CD4-positive, alpha-beta memory T cell (primary cell): ENCODE measurements at regions of chr9 and their contacts with region 1.

Region 1: DNA sequence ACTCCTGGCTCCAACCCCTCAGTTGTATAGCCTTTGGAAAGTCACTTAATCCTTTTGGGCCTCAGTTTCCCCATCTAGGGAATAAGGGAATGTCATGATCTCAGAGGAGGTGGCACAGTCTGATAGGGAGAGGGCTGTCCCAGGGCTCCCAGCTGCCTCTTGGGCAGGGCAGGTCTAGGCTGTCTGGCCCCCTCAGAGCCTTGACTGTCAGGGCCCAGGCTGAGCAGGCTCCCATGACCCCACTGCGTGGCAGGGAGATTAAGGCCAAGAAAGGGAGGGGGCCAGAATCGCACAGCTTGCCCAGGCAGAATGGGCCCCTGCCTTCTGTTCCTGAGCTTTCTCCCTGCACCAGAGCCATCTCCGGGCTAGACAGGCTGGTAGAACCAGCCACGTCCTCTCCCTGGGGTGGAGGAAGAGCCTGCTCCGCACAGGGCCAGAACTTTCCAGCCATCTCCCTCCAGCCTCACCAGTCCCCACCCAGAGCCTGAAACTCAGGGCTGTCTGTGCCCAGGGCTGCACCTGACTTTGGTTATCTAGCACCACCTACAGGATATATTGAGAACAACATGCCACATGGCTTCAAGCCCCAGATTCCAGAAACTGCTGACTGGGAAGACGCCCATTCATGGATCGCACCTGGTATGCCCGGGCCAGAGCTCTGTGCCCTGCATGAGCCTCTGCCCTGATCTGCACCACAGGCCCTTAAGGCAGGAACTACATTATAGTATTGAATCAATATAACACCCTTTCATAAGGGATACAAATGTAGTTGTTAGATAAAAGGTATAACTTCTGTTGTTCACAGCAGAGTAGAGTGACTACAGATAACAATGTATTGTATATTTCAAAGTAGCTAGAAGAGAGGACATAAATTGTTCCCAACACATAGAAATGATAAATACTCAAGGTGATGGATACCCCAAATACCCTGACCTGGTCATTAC is 32.0 kb downstream of the NAIF1 start:
- DNase-seq: peak; percentile 78 to 82 (median 80)
- H3K4me3 ChIP-seq: no peak overlapping the region
- H3K4me3 Mint-ChIP-seq: peak overlapping the region; percentile 11 to 84 (median 64)
- H3K27ac ChIP-seq: peak overlapping the region; percentile 15
- H3K27ac Mint-ChIP-seq: peak overlapping the region; percentile 87 to 95 (median 92)
- H3K4me1 ChIP-seq: peaks cover 51% of the 10 kb centered on the region
- H3K4me1 Mint-ChIP-seq: peaks cover 19 to 46% (median 32%) of the 10 kb centered on the region in 4 donors
- H3K27me3 ChIP-seq: no peaks in the 10 kb centered on the region
- H3K27me3 Mint-ChIP-seq: no peaks in the 10 kb centered on the region

Region 2: GRCh38 chr9:127869310-127870152 is 165.6 kb before region 1 on chr9:
- CTCF ChIA-PET with region 1: interaction called, 15 read pairs
- POLR2A ChIA-PET with region 1: no interaction called
- intact Hi-C with region 1: no loop called
- DNase-seq: peak; percentile 61 to 76 (median 63)
- H3K4me3 ChIP-seq: no peak overlapping the region
- H3K4me3 Mint-ChIP-seq: no peak overlapping the region
- H3K27ac ChIP-seq: no peak overlapping the region
- H3K27ac Mint-ChIP-seq: peak overlapping the region in 2 of 7 donors; percentile 31 to 53
- H3K4me1 ChIP-seq: peaks cover 20% of the 10 kb centered on the region
- H3K4me1 Mint-ChIP-seq: peaks cover 13 to 20% (median 15%) of the 10 kb centered on the region in 4 donors
- H3K27me3 ChIP-seq: no peaks in the 10 kb centered on the region
- H3K27me3 Mint-ChIP-seq: no peaks in the 10 kb centered on the region

Region 3: GRCh38 chr9:127943731-127944144 is 91.4 kb before region 1 on chr9:
- CTCF ChIA-PET with region 1: interaction called, 216 read pairs
- POLR2A ChIA-PET with region 1: interaction called, 130 read pairs
- intact Hi-C with region 1: loop called (anchors 1 kb)
- DNase-seq: peak; percentile 66 to 76 (median 72)
- H3K4me3 ChIP-seq: no peak overlapping the region
- H3K4me3 Mint-ChIP-seq: no peak overlapping the region
- H3K27ac ChIP-seq: no peak overlapping the region
- H3K27ac Mint-ChIP-seq: peak overlapping the region; percentile 78 to 93 (median 88)
- H3K4me1 ChIP-seq: peaks cover 30% of the 10 kb centered on the region
- H3K4me1 Mint-ChIP-seq: peaks cover 16 to 50% (median 23%) of the 10 kb centered on the region in 4 donors
- H3K27me3 ChIP-seq: no peaks in the 10 kb centered on the region
- H3K27me3 Mint-ChIP-seq: no peaks in the 10 kb centered on the region

Region 4: GRCh38 chr9:127980706-127981558 is 54.2 kb before region 1 on chr9 and contains the start of gene EEIG1:
- CTCF ChIA-PET with region 1: interaction called, 182 read pairs
- POLR2A ChIA-PET with region 1: interaction called, 1,317 read pairs
- intact Hi-C with region 1: loop called (anchors 1 kb)
- DNase-seq: peak; percentile 96 to 99 (median 97)
- H3K4me3 ChIP-seq: peak within 1 kb of the TSS; percentile 72 to 92
- H3K4me3 Mint-ChIP-seq: peak within 1 kb of the TSS; percentile 94 to 98 (median 97)
- H3K27ac ChIP-seq: peak within 1 kb of the TSS; percentile 78
- H3K27ac Mint-ChIP-seq: peak within 1 kb of the TSS; percentile 92 to 97 (median 94)
- H3K4me1 ChIP-seq: peaks cover 46% of the 10 kb centered on the region
- H3K4me1 Mint-ChIP-seq: peaks cover 27 to 51% (median 38%) of the 10 kb centered on the region in 4 donors
- H3K27me3 ChIP-seq: no peaks in the 10 kb centered on the region
- H3K27me3 Mint-ChIP-seq: no peaks in the 10 kb centered on the region
- total RNA-seq, gene EEIG1: 516 to 550 TPM

Region 5: DNA sequence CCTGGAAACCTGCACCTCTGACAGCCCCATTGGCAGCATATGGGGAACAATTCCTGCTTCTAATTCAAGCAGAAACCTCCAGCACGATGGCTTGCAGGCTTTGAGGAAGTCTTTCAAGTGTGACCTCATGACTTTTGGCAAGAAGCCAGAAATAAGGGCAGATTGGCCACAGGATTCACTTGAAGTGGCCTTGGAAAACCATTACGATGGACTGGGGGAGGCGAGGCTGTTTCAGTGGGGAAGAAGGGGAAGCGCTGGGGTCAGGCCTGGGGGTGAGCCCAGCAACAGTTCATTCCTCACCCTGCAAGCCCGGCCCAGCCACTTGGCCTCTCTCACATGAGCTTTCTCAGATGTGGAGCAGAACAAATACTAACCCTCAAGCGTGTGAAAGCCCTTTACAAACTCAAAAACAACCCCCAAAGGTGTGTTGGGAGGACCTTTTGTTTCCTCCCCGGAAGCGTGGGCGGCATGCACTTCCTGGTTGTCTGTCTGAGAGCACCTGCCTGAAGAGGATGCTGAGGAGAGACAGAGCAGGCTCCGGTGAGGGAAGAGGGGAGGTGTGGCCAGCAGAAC is 27.4 kb before region 1 on chr9:
- CTCF ChIA-PET with region 1: interaction called, 12 read pairs
- POLR2A ChIA-PET with region 1: interaction called, 313 read pairs
- intact Hi-C with region 1: loop called (anchors 1 kb)
- DNase-seq: peak; percentile 90 to 97 (median 92)
- H3K4me3 ChIP-seq: peak overlapping the region in 1 of 2 donors; percentile 29
- H3K4me3 Mint-ChIP-seq: peak overlapping the region; percentile 75 to 93 (median 82)
- H3K27ac ChIP-seq: peak overlapping the region; percentile 46
- H3K27ac Mint-ChIP-seq: peak overlapping the region; percentile 94 to 100 (median 97)
- H3K4me1 ChIP-seq: peaks cover 79% of the 10 kb centered on the region
- H3K4me1 Mint-ChIP-seq: peaks cover 33 to 90% (median 61%) of the 10 kb centered on the region in 4 donors
- H3K27me3 ChIP-seq: no peaks in the 10 kb centered on the region
- H3K27me3 Mint-ChIP-seq: no peaks in the 10 kb centered on the region

Region 6: GRCh38 chr9:128055344-128056040 is 20.4 kb after region 1 on chr9:
- CTCF ChIA-PET with region 1: interaction called, 13 read pairs
- POLR2A ChIA-PET with region 1: no interaction called
- intact Hi-C with region 1: no loop called
- DNase-seq: no peak
- H3K4me3 ChIP-seq: no peak overlapping the region
- H3K4me3 Mint-ChIP-seq: no peak overlapping the region
- H3K27ac ChIP-seq: no peak overlapping the region
- H3K27ac Mint-ChIP-seq: no peak overlapping the region
- H3K4me1 ChIP-seq: peaks cover 4% of the 10 kb centered on the region
- H3K4me1 Mint-ChIP-seq: peaks cover 0 to 2% (median 0%) of the 10 kb centered on the region in 4 donors
- H3K27me3 ChIP-seq: no peaks in the 10 kb centered on the region
- H3K27me3 Mint-ChIP-seq: no peaks in the 10 kb centered on the region

Region 7: DNA sequence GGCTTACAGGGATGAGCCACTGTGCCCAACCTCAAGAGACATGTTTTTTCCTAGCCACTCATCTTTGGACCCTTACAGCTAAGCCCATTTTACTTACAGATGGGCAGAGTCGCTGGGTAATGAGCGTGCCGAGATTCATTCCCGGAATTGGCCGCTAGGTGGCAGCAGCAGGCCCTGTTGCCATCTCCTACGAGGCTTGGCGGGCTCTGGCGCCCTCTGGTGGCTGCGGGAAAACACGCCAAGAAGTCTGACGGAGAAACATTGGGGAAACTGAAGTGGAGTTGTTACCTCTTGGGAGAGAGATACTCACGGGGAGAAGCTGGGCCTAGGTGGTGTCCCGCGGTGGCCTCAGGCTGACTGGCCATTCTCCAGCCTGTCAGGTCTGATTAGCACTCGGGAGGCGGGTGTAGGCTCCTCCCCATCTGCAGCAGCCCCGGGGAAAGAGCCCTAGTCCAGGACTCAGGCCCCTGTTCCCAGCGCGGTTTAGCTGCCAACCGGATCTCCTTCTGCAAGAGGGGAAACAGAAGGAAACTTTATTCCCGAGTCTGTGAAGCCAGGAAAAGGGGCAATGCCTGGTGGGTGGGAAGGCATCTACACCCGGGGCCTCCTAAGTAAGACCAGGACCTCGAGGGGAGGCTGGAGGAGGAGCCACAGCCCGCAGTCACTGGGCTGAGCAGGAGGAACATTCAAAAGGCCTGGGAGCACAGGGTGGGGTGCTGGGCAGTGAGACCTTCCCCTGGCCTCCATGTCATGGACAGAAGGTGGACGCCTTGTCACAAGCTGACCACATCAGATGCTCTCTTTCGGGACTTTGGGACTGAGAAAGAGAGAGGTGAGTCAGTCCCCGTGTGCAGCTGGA is 82.7 kb after region 1 on chr9:
- CTCF ChIA-PET with region 1: interaction called, 7 read pairs
- POLR2A ChIA-PET with region 1: no interaction called
- intact Hi-C with region 1: loop called (anchors 2 kb)
- DNase-seq: peak; percentile 88 to 93 (median 91)
- H3K4me3 ChIP-seq: no peak overlapping the region
- H3K4me3 Mint-ChIP-seq: peak overlapping the region in 2 of 8 donors; percentile 48 to 50
- H3K27ac ChIP-seq: no peak overlapping the region
- H3K27ac Mint-ChIP-seq: peak overlapping the region in 6 of 7 donors; percentile 9 to 91 (median 61)
- H3K4me1 ChIP-seq: peaks cover 6% of the 10 kb centered on the region
- H3K4me1 Mint-ChIP-seq: peaks cover 3 to 7% (median 5%) of the 10 kb centered on the region in 4 donors
- H3K27me3 ChIP-seq: no peaks in the 10 kb centered on the region
- H3K27me3 Mint-ChIP-seq: no peaks in the 10 kb centered on the region